Activated naive CD4-positive, alpha-beta T cell treated with anti-CD3 and anti-CD28 coated beads for 36 hours (primary cell): ENCODE measurements at regions of chr1 and their contacts with region 1.

Region 1: DNA sequence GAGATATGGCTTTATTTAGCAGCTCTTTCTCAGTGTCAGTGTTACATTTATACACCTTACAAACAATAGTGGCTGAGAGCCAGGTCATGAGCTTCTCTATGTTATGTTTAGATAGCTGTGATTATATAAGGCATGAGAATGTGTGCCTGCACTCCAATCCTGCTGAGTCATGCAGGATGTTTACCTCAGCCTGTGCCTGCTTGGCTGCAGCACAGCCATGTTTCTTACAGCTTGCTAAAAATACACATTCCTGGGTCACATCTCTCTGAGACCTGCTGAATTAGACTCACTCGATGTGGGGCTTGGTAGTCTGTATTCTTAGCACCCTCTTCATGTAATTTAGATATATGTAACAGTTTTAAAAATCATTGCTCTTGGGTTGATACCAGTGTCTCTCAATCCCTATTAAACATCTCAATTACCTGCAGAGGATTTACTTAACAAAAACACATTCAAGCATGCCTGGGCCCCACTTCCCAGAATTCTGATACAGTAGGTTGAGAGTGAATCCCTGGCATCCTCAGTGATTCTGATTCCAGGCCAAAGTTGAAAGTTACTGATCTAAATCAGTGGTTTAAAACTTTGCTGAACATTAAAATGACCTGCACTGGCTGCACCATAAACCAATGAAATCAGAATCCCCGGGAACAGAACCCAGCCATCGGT is 107.5 kb downstream of the GDAP2 start:
- DNase-seq: peak; percentile 21
- H3K4me3 Mint-ChIP-seq: no peak overlapping the region
- H3K27ac Mint-ChIP-seq: no peak overlapping the region
- H3K4me1 Mint-ChIP-seq: no peaks in the 10 kb centered on the region
- H3K27me3 Mint-ChIP-seq: peaks cover 11% of the 10 kb centered on the region

Region 2: GRCh38 chr1:118004312-118004711 is 182.4 kb after region 1 on chr1:
- CTCF ChIA-PET with region 1: no interaction called
- intact Hi-C with region 1: loop called (anchors 5 kb)
- DNase-seq: no peak
- H3K4me3 Mint-ChIP-seq: no peak overlapping the region
- H3K27ac Mint-ChIP-seq: no peak overlapping the region
- H3K4me1 Mint-ChIP-seq: no peaks in the 10 kb centered on the region
- H3K27me3 Mint-ChIP-seq: peaks cover 10% of the 10 kb centered on the region